Breast epithelium (tissue), 4 donors: ENCODE measurements at regions of chr5 and their contacts with region 1.

Region 1: GRCh38 chr5:58902765-58903164 is 319.9 kb downstream of the RAB3C start:
- DNase-seq: no peak
- H3K4me3 ChIP-seq: no peak overlapping the region
- H3K27ac ChIP-seq: no peak overlapping the region
- H3K4me1 ChIP-seq: no peaks in the 10 kb centered on the region
- H3K27me3 ChIP-seq: no peaks in the 10 kb centered on the region
- CTCF ChIP-seq: no peak
- POLR2A ChIP-seq: no peak

Region 2: DNA sequence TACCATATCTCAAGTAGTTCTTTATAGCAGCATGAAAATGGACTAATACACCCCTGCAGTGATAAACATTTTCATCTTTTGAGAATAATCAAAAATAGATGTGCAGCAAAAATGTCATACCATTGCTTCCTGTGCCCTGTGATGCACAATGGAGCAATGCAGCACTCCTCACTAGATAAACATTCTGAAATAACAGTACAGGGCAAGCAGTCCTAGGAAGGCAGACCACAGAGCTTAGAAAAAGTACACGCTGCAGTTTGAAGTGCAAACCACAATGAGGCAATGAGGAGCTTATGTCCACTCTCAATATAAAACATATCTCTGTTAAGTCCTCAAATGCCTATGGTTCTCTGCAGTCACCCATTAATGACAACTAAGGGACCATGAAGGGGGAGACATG is 623.2 kb after region 1 on chr5:
- intact Hi-C with region 1: loop called (anchors 5 kb)
- DNase-seq: no peak
- H3K4me3 ChIP-seq: no peak overlapping the region
- H3K27ac ChIP-seq: no peak overlapping the region
- H3K4me1 ChIP-seq: no peaks in the 10 kb centered on the region
- H3K27me3 ChIP-seq: no peaks in the 10 kb centered on the region
- CTCF ChIP-seq: no peak
- POLR2A ChIP-seq: no peak